Astrocyte of the cerebellum (primary cell): ENCODE measurements at regions of chr16 and their contacts with region 1.

Region 1: GRCh38 chr16:46859719-46860152 is 24.4 kb upstream of the GPT2 start:
- DNase-seq: no peak
- H3K4me3 ChIP-seq: no peak overlapping the region
- CTCF ChIP-seq: no peak

Region 2: DNA sequence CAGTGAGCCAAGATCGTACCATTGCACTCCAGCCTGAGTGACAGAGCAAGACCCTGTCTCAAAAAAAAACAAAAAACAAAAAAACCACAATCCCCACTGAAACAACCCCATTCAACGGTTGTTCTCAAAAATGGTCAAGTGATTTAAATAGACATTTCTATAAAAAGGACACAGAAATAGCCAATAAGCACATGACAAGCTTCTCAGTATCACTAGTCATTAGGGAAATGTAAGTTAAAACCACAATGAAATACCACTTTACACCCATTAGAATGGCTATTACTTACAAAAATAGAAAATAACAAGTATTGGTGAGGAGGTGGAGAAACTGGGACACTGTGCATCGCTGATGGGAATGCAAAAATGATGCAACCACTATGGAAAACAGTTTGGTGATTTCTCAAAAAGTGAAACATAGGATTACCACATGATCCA is 85.0 kb before region 1 on chr16:
- in situ Hi-C with region 1: no loop called
- DNase-seq: no peak
- H3K4me3 ChIP-seq: no peak overlapping the region
- CTCF ChIP-seq: no peak

Region 3: GRCh38 chr16:46954562-46954961 is 94.8 kb after region 1 on chr16:
- in situ Hi-C with region 1: loop called (anchors 10 kb)
- DNase-seq: no peak
- H3K4me3 ChIP-seq: no peak overlapping the region
- CTCF ChIP-seq: no peak